Astrocyte of the cerebellum (primary cell): ENCODE measurements at regions of chr11 and their contacts with region 1.

Region 1: GRCh38 chr11:61524963-61525587 is 16.5 kb downstream of the LRRC10B start:
- DNase-seq: no peak
- H3K4me3 ChIP-seq: no peak overlapping the region
- CTCF ChIP-seq: no peak

Region 2: DNA sequence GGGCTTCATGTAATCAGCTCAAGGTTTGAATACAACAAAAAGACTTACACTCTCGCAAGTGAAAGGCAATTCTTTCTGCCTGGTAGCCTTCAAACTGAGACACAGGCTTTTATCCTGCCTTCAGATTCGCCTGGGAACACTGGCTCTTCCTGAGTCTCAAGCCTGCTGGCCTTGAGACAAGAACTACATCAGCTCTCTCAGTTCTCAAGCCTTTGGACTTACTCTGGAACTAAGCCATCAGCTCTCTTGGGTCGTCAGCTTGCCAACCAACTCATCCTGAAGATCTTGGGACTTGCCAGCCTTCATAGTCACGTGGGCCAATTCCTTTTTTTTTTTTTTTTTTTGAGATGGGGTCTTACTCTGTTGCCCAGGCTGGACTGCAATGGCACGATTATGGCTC is 52.2 kb before region 1 on chr11:
- in situ Hi-C with region 1: no loop called
- DNase-seq: peak; percentile 24
- H3K4me3 ChIP-seq: no peak overlapping the region
- CTCF ChIP-seq: no peak

Region 3: DNA sequence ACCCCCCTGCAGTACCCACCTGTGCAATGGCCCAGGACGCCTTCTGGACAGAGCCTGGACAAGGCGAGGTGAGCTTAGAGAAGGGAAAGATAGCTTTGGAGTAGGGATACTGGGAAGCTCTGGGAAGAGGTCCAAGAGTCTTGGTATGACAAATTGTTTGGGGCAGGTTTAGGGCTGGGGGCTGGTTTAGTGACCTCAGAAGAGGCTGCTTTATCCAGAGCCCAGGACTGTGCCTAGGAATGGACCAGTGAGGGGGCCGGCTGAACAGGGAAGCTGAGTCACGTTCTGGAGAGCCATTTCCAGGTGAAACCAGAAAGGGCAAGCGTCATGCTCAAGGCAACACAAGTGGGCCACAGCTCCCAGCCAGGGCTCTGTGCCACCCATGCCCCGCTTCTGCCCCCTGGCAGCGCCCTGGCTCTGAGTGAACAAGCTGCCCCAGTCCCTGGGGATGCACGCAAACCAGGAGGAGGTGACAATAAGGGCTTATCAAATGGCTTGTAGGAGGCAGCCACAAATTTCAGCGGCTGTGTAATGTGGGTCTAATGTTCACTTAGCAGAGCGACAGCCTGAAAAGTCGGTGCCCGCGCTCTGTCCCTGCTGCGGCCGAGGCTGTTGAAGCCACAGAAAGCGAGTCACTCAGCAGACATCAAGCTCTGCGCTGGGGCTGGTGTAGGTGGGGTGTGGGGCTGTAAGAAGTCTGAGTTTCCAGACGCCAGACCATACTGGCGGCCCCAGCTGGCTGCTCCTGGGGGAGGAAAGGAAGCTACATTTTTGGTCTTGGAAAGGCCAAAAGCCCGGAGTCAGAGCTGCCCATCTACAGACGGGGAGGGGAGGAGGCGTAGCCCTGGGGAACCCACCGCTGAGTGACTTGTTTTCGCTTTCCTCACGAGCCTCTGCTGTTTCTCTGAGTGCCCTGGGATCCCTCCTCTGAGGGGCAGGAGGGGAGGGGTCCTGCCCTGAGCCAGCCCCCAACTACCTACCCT is 74.1 kb after region 1 on chr11:
- in situ Hi-C with region 1: loop called (anchors 5 kb)
- DNase-seq: peak; percentile 11
- H3K4me3 ChIP-seq: no peak overlapping the region
- CTCF ChIP-seq: no peak